ENCODE measurements at regions of chr12 and their contacts with region 1.

Region 1: DNA sequence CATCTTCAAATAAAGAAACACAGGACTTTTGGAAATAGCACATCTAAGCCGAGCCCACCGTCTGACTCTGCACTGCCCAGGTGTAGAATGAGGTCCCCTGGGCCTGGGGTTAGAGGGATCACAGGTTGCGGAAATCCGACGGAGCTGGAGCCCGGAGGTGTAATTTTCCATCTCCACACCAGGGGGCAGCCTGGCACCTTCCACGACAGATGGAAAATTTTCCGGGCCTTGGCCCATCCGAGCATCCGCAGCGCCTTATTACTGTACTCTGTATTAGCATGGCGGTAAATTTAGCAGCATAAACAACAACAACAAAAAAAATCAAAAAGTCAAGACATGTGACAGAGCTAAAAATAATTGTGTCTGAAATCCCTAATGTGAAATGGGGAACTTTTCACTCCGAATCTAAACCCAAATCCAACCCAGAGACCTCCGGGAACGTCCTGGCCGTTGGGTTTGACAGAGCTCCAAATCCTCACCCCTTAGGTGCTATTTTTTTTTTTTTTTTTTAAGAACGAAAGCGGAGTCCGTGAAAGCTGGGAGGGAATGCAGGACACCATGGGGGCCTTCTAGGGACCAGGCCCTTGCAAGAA is 93.9 kb downstream of the KSR2 start:
- DNase-seq: peak; percentile 85
- H3K4me3 Mint-ChIP-seq: no peak overlapping the region
- H3K27ac Mint-ChIP-seq: no peak overlapping the region
- H3K4me1 Mint-ChIP-seq: peaks cover 14% of the 10 kb centered on the region
- H3K27me3 Mint-ChIP-seq: peaks cover 13% of the 10 kb centered on the region

Region 2: DNA sequence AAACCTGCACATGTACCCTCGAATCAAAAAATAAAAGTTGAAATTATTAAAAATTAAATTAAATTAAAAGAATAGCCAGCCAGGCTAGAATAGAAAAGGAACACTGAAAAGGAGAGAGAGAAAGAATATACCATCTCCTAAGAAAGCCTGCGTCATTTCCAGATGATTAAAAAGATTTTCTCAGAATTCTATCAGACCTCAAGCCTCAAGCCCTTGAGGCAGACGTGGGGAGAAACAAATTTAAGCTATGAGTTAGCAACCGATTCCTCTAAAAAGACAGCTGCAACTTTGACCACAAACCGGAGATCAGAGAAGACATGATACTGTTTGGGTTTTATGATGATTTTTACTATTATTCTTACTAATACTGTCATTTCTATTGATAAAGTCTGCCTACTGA is 44.5 kb before region 1 on chr12:
- CTCF ChIA-PET with region 1: no interaction called
- POLR2A ChIA-PET with region 1: no interaction called
- intact Hi-C with region 1: no loop called
- DNase-seq: no peak
- H3K4me3 Mint-ChIP-seq: no peak overlapping the region
- H3K27ac Mint-ChIP-seq: no peak overlapping the region
- H3K4me1 Mint-ChIP-seq: no peaks in the 10 kb centered on the region
- H3K27me3 Mint-ChIP-seq: no peaks in the 10 kb centered on the region

Region 3: GRCh38 chr12:117857632-117858612 is 17.0 kb before region 1 on chr12:
- CTCF ChIA-PET with region 1: interaction called, 21 read pairs
- POLR2A ChIA-PET with region 1: no interaction called
- intact Hi-C with region 1: no loop called
- DNase-seq: peak; percentile 73
- H3K4me3 Mint-ChIP-seq: no peak overlapping the region
- H3K27ac Mint-ChIP-seq: no peak overlapping the region
- H3K4me1 Mint-ChIP-seq: no peaks in the 10 kb centered on the region
- H3K27me3 Mint-ChIP-seq: peaks cover 4% of the 10 kb centered on the region

Region 4: DNA sequence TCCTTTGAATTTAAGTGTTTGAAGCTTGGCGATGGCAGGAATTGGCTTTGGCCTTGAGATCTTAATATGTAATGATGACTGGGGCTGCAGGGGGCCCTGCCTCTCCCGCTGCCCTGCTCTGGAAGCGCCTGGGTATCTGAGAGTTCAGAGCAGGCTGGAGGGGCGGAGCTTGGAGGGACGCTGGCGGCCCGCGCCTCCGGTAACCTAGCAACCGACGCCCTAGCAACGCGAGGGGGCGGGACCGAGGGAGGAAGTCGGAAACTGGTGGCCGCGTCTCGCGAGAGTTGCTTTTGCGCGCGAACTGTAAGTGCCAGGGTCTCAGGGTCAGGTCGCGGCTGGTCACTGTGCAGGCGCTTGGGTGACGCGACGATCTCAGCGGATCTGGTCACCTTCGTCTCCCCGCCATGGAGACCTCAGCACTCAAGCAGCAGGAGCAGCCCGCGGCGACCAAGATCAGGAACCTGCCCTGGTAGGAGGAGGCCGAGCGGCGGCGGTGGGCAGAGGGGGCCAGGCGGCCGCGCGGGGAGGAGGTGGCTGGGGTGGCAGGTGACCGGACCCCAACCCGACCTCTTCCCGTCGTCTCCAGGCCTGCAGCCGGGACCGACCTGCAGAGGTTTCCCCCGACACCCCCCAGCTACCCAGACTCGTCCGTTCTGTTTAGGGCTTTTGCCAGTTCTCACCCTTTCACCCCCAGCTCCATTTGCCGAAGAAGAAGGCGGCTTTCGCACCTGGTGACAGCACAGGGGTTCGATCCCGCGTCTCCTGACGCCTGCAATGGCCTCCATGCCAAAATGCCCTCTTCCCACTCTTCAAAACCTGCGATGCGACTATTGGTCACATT is 141.7 kb after region 1 on chr12 and contains the start of gene RFC5:
- CTCF ChIA-PET with region 1: interaction called, 21 read pairs
- POLR2A ChIA-PET with region 1: interaction called, 6 read pairs
- intact Hi-C with region 1: no loop called
- DNase-seq: peak; percentile 98
- H3K4me3 Mint-ChIP-seq: peak within 1 kb of the TSS; percentile 94
- H3K27ac Mint-ChIP-seq: peak within 1 kb of the TSS; percentile 82
- H3K4me1 Mint-ChIP-seq: peaks cover 28% of the 10 kb centered on the region
- H3K27me3 Mint-ChIP-seq: peaks cover 2% of the 10 kb centered on the region
- total RNA-seq, gene RFC5: 65.8 to 70.8 TPM

Region 5: GRCh38 chr12:118055144-118055557 is 180.2 kb after region 1 on chr12:
- CTCF ChIA-PET with region 1: interaction called, 12 read pairs
- POLR2A ChIA-PET with region 1: interaction called, 7 read pairs
- intact Hi-C with region 1: loop called (anchors 1 kb)
- DNase-seq: peak; percentile 87
- H3K4me3 Mint-ChIP-seq: no peak overlapping the region
- H3K27ac Mint-ChIP-seq: peak overlapping the region; percentile 9
- H3K4me1 Mint-ChIP-seq: peaks cover 60% of the 10 kb centered on the region
- H3K27me3 Mint-ChIP-seq: no peaks in the 10 kb centered on the region

Region 6: GRCh38 chr12:118135788-118136558 is 261.0 kb after region 1 on chr12 and contains the start of gene PEBP1:
- CTCF ChIA-PET with region 1: interaction called, 13 read pairs
- POLR2A ChIA-PET with region 1: interaction called, 7 read pairs
- intact Hi-C with region 1: no loop called
- DNase-seq: peak; percentile 97
- H3K4me3 Mint-ChIP-seq: peak within 1 kb of the TSS; percentile 91
- H3K27ac Mint-ChIP-seq: peak within 1 kb of the TSS; percentile 74
- H3K4me1 Mint-ChIP-seq: peaks cover 27% of the 10 kb centered on the region
- H3K27me3 Mint-ChIP-seq: no peaks in the 10 kb centered on the region
- total RNA-seq, gene PEBP1: 128 to 132 TPM